Psoas muscle (tissue), 8 donors: ENCODE measurements at regions of chr14 and their contacts with region 1.

Region 1: GRCh38 chr14:32509632-32510187 is 180.6 kb downstream of the AKAP6 start:
- DNase-seq: peak; percentile 67 to 82
- ATAC-seq: peak; percentile 81 to 88 (median 82)
- H3K4me3 ChIP-seq: peak overlapping the region; percentile 22
- H3K27ac ChIP-seq: peak overlapping the region; percentile 91
- H3K4me1 ChIP-seq: peaks cover 82% of the 10 kb centered on the region
- H3K27me3 ChIP-seq: no peaks in the 10 kb centered on the region
- CTCF ChIP-seq: no peak

Region 2: GRCh38 chr14:32494609-32495434 is 14.9 kb before region 1 on chr14:
- intact Hi-C with region 1: loop called in 1 of 2 experiments (anchors 2 kb)
- DNase-seq: peak; percentile 20 to 59
- ATAC-seq: peak; percentile 86 to 89 (median 87)
- H3K4me3 ChIP-seq: peak overlapping the region; percentile 73
- H3K27ac ChIP-seq: peak overlapping the region; percentile 95
- H3K4me1 ChIP-seq: peaks cover 39% of the 10 kb centered on the region
- H3K27me3 ChIP-seq: no peaks in the 10 kb centered on the region
- CTCF ChIP-seq: no peak

Region 3: DNA sequence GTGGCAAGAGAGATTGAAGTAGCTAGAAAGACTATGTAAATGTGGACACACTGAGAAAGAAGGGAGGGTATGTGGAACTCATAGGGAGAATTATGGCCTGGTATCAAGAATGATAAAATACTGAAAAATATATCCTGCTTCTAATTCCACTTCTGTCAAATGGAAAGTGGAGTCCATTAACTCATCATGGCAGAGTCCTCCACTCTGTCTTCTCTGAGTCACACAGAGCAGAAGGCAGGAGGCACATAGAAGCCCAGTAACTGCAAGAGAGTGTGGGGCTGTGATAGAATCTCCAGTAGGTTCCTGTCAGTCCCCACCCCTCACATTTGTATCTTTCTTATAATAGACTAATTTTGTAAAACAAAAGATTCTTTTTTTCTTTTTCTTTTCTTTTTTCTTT is 43.1 kb after region 1 on chr14:
- intact Hi-C with region 1: no loop called
- DNase-seq: no peak
- ATAC-seq: peak in 3 of 4 donors; percentile 33 to 58 (median 54)
- H3K4me3 ChIP-seq: no peak overlapping the region
- H3K27ac ChIP-seq: peak overlapping the region; percentile 0
- H3K4me1 ChIP-seq: no peaks in the 10 kb centered on the region
- H3K27me3 ChIP-seq: no peaks in the 10 kb centered on the region
- CTCF ChIP-seq: no peak

Region 4: GRCh38 chr14:32724867-32725471 is 215.3 kb after region 1 on chr14:
- intact Hi-C with region 1: no loop called
- DNase-seq: no peak
- ATAC-seq: peak in 2 of 4 donors; percentile 21 to 31
- H3K4me3 ChIP-seq: peak overlapping the region; percentile 16
- H3K27ac ChIP-seq: no peak overlapping the region
- H3K4me1 ChIP-seq: peaks cover 6% of the 10 kb centered on the region
- H3K27me3 ChIP-seq: no peaks in the 10 kb centered on the region
- CTCF ChIP-seq: no peak